ENCODE measurements at regions of chr11 and their contacts with region 1.

Region 1: DNA sequence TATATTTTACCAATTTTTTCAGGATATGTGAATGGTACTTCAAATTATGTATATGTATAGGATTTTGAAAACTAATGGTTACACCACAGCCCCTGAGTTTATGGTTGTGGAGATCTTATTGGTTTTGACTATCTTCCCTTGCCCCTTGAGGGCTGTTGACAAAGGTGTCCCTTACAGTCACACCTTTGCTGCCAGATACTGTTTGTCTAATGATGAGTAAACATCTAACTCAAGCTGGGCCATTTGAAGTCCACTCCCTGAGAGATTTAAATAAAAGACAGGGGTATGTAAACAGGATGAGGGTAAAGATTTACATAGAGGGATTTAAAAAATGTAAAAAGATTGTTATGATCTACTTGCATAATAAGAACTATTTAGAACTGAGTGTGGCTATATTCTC is 38.9 kb upstream of the LUZP2 start:
- DNase-seq: no peak
- H3K4me3 ChIP-seq: no peak overlapping the region
- CTCF ChIP-seq: no peak
- POLR2A ChIP-seq: no peak

Region 2: DNA sequence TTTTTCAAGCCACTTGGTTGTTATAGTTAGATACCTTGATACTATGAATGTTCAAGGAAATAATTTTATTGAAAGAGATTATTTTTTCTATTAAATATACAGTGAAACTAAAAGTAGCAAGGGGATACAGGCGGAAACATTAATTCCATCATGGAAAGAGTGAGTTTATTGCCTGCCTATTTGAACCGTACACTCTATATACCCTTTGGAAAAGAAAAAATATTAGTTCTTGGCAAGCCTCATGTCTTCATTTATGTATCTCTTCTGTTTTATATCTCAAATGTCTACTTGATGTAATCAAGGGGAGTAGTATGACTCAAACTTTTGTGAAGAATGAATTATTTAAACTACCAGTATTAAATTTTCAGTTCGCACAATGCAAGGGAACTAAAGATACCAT is 1737.5 kb before region 1 on chr11:
- intact Hi-C with region 1: loop called (anchors 5 kb)
- DNase-seq: no peak
- H3K4me3 ChIP-seq: no peak overlapping the region
- CTCF ChIP-seq: no peak
- POLR2A ChIP-seq: no peak